Transverse colon (tissue), 4 donors: ENCODE measurements at regions of chr2 and their contacts with region 1.

Region 1: GRCh38 chr2:238263204-238264071 is 23.6 kb upstream of the HES6 start:
- DNase-seq: peak; percentile 94
- H3K4me3 ChIP-seq: no peak overlapping the region
- H3K27ac ChIP-seq: peak overlapping the region; percentile 64 to 74 (median 68)
- H3K4me1 ChIP-seq: peaks cover 12 to 24% (median 17%) of the 10 kb centered on the region in 4 donors
- H3K27me3 ChIP-seq: no peaks in the 10 kb centered on the region
- CTCF ChIP-seq: peak; percentile 74 to 93 (median 81)
- EP300 ChIP-seq: no peak
- POLR2A ChIP-seq: no peak

Region 2: GRCh38 chr2:238162846-238163441 is 100.5 kb before region 1 on chr2:
- in situ Hi-C with region 1: no loop called
- intact Hi-C with region 1: loop called (anchors 1 kb)
- DNase-seq: no peak
- H3K4me3 ChIP-seq: no peak overlapping the region
- H3K27ac ChIP-seq: no peak overlapping the region
- H3K4me1 ChIP-seq: peaks cover 11 to 26% (median 19%) of the 10 kb centered on the region in 4 donors
- H3K27me3 ChIP-seq: peaks cover 59% of the 10 kb centered on the region
- CTCF ChIP-seq: no peak
- EP300 ChIP-seq: no peak
- POLR2A ChIP-seq: no peak

Region 3: GRCh38 chr2:238190445-238190844 is 73.0 kb before region 1 on chr2:
- in situ Hi-C with region 1: no loop called
- intact Hi-C with region 1: loop called (anchors 10 kb)
- DNase-seq: no peak
- H3K4me3 ChIP-seq: no peak overlapping the region
- H3K27ac ChIP-seq: no peak overlapping the region
- H3K4me1 ChIP-seq: no peaks in the 10 kb centered on the region
- H3K27me3 ChIP-seq: no peaks in the 10 kb centered on the region
- CTCF ChIP-seq: no peak
- EP300 ChIP-seq: no peak
- POLR2A ChIP-seq: no peak